Tibial artery (tissue), 4 donors: ENCODE measurements at regions of chr2 and their contacts with region 1.

Region 1: DNA sequence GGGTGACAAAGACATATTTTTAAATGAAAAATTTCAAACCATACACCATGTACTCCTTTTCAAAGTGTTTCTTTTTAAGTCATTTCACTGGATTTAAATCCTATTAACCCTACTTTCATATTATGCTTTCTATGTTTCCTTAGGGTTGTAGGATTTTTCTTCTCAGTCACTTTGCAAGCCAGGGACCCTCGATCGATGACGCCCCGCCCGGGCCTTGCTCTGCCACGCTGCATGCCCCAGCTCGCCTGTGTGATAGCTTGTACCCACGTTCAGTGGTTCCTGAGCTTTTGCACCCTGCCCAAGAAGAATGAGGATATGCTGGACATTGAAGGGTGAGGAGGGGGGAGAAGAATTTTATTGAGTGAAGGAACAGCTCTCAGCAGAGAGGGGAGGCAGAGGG is 568.0 kb downstream of the TRIB2 start:
- DNase-seq: no peak
- H3K4me3 ChIP-seq: no peak overlapping the region
- H3K27ac ChIP-seq: no peak overlapping the region
- H3K4me1 ChIP-seq: no peaks in the 10 kb centered on the region
- H3K27me3 ChIP-seq: no peaks in the 10 kb centered on the region
- CTCF ChIP-seq: no peak

Region 2: DNA sequence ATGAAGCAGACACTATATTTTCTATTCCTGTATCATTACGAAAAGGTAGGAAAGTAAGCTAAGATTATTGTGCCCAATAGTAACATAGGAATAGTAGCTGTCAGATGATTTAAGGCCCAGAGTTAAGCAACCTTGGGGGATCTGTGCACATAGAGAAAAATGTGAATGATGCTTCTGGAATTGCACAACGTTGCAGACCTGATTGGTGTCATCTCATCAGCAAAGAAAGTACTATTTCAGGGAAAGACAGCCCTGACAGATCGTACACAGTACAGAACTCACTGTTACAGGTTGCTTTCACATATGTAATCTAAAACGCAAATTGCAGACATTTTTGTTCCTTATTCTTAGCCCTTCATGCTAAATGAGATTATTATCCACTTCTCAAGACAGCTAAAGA is 32.1 kb before region 1 on chr2:
- intact Hi-C with region 1: loop called (anchors 1 kb)
- DNase-seq: no peak
- H3K4me3 ChIP-seq: no peak overlapping the region
- H3K27ac ChIP-seq: no peak overlapping the region
- H3K4me1 ChIP-seq: no peaks in the 10 kb centered on the region
- H3K27me3 ChIP-seq: no peaks in the 10 kb centered on the region
- CTCF ChIP-seq: no peak